Activated T-helper 2 cell treated with anti-CD3 and anti-CD28 coated beads, Interferon-gamma antibody, Interleukin-2, Interleukin-4, amounts not matched to agents 10 μg/mL and 5 μg/mL and 100 μg/mL, durations not matched to agents 14 hours and 24 hours and 36 hours (primary cell): ENCODE measurements at regions of chr7 and their contacts with region 1.

Region 1: DNA sequence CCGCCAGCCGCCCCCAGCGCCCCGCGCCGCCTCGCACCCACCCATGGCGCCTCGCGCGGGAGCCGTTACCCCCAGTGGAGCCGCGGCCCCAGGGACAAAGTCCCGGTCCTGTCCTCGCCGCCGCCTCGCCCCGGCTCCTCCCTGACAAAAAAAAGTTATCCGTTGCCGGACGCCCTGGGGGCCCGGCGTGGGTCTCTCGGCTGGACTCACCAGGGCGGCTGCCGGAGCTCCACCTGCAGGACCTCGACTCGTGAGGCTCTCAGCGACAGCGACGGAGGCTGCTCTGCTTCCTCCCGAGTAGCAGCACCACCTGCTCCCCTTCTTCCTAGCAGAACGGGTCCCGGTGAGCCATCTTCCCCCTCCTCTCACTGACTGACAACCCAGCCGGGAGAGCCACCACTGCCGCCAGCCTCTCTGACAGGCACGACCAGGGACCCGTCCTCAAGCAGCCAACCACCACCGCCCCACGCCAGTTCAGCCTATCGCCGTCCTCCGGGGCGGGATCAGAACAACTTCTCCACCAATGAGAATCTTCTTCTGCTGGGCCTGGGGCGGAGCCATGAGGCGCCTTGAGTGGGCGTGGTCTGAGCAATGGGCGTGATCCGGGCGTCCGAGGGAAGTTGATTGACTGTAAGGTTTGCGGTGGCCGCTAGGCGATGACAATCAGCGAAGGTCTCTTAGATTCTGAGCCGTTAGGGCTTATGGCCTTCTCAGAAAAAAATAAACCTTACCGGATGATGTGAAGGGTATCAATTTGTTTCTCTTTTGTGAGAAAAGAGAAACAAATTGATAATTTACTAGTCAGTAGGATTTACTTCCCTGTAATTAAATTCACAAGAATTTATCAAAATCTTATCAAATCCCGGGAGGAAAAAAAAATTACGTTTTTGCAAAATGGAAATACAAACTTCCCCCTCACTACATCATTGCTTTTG is at the start of gene HYCC1:
- DNase-seq: peak; percentile 99
- H3K4me3 Mint-ChIP-seq: peak within 1 kb of the TSS; percentile 89
- H3K27ac Mint-ChIP-seq: peak within 1 kb of the TSS; percentile 85
- H3K4me1 Mint-ChIP-seq: peaks cover 33% of the 10 kb centered on the region
- H3K27me3 Mint-ChIP-seq: no peaks in the 10 kb centered on the region
- total RNA-seq, gene HYCC1: 49.9 and 55.1 TPM in 2 replicates

Region 2: GRCh38 chr7:21671859-21672258 is 1342.1 kb before region 1 on chr7:
- intact Hi-C with region 1: no loop called
- DNase-seq: no peak
- H3K4me3 Mint-ChIP-seq: no peak overlapping the region
- H3K27ac Mint-ChIP-seq: no peak overlapping the region
- H3K4me1 Mint-ChIP-seq: peaks cover 7% of the 10 kb centered on the region
- H3K27me3 Mint-ChIP-seq: peaks cover 5% of the 10 kb centered on the region

Region 3: DNA sequence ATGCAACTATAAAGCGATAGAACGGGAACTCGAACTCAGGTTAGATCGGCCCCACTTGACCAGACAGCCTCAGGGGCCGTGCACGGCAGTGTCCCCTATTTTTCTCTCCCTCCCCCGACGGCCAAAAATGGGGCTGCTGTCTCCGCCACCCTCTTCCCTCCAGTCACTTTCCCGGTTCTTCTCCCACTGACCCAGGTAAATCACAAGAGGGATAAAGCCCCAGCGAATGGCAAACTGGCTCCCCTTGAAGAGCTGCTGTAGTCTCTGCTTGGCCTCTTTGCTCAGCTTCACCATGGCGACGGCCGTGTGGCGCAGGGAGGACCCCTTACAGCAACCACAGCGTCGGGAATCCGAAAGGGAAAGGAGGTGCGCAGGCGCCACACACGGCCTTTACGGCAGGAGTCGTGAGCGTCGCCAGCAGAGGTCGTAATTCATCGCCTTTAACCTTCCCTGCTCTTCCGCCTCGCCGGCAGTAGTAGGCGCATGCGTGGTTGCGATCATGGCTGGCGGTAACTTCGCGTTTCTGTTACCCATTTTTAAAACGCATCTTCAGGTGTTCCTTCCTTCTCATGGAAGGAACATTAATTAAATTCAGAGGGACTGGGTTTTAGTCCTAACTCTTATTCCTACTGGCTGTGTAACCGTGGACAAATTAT is 191.4 kb before region 1 on chr7 and contains the start of gene TOMM7:
- intact Hi-C with region 1: loop called (anchors 5 kb)
- DNase-seq: peak; percentile 84
- H3K4me3 Mint-ChIP-seq: peak within 1 kb of the TSS; percentile 97
- H3K27ac Mint-ChIP-seq: peak within 1 kb of the TSS; percentile 93
- H3K4me1 Mint-ChIP-seq: peaks cover 31% of the 10 kb centered on the region
- H3K27me3 Mint-ChIP-seq: peaks cover 14% of the 10 kb centered on the region
- total RNA-seq, gene TOMM7: 216 and 221 TPM in 2 replicates

Region 4: DNA sequence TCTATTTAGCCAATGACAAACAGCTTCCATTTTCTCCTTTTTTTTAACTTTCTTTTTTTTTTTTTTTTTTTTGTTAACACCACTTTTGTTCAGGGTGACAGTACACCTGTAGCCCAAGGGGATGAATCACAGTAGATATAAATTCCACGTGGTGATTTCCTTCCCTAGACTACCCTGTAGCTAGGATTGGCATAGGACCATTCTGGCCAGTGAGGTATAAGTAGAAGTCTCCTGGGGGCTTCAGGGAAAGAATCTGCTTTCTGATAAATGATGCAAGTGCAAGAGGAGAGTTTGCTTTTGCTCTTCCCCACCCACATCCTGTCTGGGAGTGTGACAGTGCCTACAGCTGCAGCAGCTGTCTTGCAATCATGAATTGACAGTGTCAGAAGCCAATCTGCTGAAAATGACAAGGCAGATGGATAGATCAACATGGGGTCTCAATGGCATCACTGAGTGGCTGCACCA is 128.2 kb before region 1 on chr7:
- intact Hi-C with region 1: loop called (anchors 5 kb)
- DNase-seq: peak; percentile 61
- H3K4me3 Mint-ChIP-seq: peak overlapping the region; percentile 65
- H3K27ac Mint-ChIP-seq: peak overlapping the region; percentile 97
- H3K4me1 Mint-ChIP-seq: peaks cover 44% of the 10 kb centered on the region
- H3K27me3 Mint-ChIP-seq: no peaks in the 10 kb centered on the region

Region 5: DNA sequence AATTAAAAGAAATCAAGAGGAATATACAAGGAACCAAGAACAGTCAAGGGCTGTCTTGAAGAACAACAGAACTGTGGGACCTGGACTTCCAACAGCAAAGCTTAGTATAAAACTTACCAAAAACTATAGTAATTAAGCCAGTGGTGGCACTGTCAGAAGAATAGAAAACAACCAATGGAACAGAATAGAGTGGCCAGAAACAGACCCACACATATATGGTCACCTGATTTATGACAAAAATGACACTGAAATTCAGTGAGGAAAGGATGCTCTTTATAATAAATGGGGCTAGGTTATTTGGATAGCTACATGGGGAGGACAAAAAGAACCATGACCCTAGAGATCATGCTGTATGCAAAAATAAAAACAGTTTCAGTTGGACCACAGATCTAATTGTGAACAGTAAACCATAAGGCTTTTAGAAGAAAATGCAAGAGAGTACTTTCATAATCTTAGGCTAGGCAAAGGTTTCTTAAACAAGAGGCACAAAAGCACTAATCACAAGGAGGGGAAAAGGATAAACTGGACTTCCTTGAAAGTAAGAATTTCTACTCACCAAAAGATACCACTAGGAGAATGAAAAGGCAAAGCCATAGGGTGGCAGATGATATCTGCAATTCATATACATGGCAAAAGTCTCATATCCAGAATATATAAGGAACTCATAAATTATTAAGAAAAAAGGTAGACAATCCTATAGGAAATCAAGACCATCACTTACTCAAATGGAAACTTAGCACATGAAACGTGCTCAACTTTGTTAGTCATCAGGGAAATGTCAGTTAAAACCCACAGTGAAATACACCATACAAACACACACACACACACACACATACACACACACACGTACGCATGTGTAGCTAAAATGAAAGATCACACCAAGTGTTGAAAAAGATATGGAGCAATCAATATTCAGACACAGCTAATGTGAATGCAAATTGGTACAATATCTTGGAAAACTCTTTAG is 20.8 kb before region 1 on chr7:
- intact Hi-C with region 1: loop called (anchors 1 kb)
- DNase-seq: no peak
- H3K4me3 Mint-ChIP-seq: peak overlapping the region; percentile 9
- H3K27ac Mint-ChIP-seq: peak overlapping the region; percentile 84
- H3K4me1 Mint-ChIP-seq: peaks cover 63% of the 10 kb centered on the region
- H3K27me3 Mint-ChIP-seq: no peaks in the 10 kb centered on the region

Region 6: GRCh38 chr7:23055582-23056178 is 41.7 kb after region 1 on chr7:
- intact Hi-C with region 1: loop called (anchors 5 kb)
- DNase-seq: peak; percentile 46
- H3K4me3 Mint-ChIP-seq: no peak overlapping the region
- H3K27ac Mint-ChIP-seq: no peak overlapping the region
- H3K4me1 Mint-ChIP-seq: peaks cover 10% of the 10 kb centered on the region
- H3K27me3 Mint-ChIP-seq: peaks cover 3% of the 10 kb centered on the region

Region 7: DNA sequence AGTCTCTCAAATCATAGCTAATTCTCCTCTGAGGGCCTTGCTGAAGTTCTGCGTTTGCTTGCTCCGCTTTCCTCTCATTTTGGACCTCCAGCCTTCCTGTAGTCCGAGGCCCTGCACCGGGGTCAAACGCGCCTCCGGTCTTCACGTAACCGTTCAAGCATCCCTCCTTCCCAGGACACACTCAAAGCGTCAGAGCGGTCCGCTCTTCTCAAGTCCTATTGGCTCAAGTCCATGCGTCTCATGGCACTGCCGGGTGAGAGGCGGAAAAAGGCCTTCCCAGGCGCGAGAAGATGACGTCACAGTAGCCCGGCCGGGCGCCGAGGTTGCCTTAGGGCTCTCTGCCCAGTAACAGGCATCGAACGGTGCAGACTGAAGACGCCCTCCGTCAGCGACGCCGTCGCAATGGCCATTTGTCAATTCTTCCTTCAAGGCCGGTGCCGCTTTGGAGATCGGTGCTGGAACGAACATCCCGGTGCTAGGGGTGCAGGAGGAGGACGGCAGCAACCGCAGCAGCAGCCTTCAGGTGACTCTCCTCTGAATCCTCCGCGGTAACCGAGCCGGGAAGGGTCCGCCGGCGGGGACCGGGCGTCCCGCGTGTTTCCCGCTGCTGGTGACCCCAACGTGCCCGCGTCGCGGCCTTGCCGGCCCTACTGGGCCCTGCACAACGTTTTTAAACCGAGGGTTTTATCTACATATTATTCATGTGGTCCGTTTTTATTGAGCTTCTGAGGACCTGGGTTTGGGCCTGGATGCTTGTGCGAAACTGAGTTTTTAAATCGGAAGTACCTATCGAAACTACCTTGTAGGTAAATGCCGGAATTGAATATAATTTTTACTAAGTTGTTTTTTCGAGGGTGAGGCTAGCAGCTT is 167.9 kb after region 1 on chr7 and contains the start of gene NUP42:
- intact Hi-C with region 1: loop called (anchors 5 kb)
- DNase-seq: peak; percentile 97
- H3K4me3 Mint-ChIP-seq: peak within 1 kb of the TSS; percentile 89
- H3K27ac Mint-ChIP-seq: peak within 1 kb of the TSS; percentile 98
- H3K4me1 Mint-ChIP-seq: peaks cover 33% of the 10 kb centered on the region
- H3K27me3 Mint-ChIP-seq: peaks cover 7% of the 10 kb centered on the region
- total RNA-seq, gene NUP42: 52.2 and 54.0 TPM in 2 replicates